Thyroid gland (tissue), 4 donors: ENCODE measurements at regions of chr11 and their contacts with region 1.

Region 1: DNA sequence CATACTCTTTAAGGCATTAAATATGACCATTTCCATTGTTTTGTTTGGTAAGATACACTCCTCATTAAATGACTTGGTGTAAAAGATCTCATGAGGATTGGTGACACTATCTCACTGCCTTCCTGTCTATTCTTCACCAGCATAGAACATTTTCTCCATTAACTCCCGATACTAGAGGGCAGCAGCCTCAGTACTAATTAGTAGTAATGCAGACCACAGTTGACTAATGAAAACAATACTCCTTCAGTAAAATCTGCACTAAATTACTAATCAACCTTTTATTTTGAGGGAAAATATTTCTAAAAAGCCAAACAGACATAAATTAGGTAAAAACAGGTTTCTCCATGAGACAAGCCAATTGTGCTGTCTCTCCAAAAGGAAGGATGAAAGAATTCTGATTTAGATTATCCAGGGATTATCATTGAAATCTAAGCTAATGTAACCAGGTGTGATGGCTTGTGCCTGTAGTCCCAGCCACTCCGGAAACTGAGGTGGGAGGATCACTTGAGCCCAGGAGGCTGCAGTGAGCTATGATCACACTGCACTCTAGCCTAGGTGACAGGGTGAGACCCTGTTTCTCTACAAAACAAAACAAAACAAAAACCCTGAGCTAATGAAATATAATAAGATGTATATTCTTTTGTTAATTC is 9.4 kb downstream of the PGM2L1 start:
- DNase-seq: peak; percentile 69 to 73
- H3K4me3 ChIP-seq: no peak overlapping the region
- H3K27ac ChIP-seq: no peak overlapping the region
- H3K4me1 ChIP-seq: peaks cover 4 to 6% of the 10 kb centered on the region in 2 donors
- H3K27me3 ChIP-seq: no peaks in the 10 kb centered on the region
- CTCF ChIP-seq: peak; percentile 46 to 84 (median 66)
- POLR2A ChIP-seq: no peak

Region 2: DNA sequence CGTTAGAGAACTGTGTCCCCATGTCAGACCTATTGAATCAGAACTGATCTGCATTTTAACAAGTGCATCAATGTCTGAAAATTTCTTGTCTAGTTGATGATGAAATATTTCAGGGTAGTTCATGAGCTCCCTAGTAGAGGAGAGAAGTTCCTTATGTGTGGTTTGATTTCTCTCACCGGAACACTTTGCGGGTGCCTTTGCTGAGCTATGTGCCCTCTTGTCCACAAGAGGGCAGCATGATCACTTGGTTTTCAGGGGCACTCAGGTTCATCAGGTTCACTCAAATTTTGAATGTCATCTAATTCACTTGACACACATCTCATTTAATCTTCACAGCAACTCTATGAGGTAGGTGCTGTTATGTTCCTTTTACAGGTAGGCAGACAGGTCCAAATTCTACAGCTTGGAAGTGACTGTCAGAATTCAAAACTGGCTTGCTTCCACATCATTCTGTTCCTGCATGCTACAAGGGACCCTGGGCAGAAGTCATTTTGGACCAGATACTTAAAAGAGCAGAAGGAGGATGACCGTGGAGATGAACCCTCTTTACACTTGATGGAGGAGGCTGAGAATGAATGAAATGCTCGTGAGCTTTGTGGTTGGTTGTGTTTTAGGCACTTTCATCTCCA is 132.9 kb before region 1 on chr11:
- intact Hi-C with region 1: loop called (anchors 10 kb)
- DNase-seq: peak; percentile 65 to 70
- H3K4me3 ChIP-seq: no peak overlapping the region
- H3K27ac ChIP-seq: no peak overlapping the region
- H3K4me1 ChIP-seq: peaks cover 16 to 31% of the 10 kb centered on the region in 2 donors
- H3K27me3 ChIP-seq: no peaks in the 10 kb centered on the region
- CTCF ChIP-seq: peak; percentile 83 to 92 (median 88)
- POLR2A ChIP-seq: no peak

Region 3: GRCh38 chr11:74443071-74443864 is 54.5 kb after region 1 on chr11:
- intact Hi-C with region 1: loop called (anchors 5 kb)
- DNase-seq: peak; percentile 85 to 86
- H3K4me3 ChIP-seq: no peak overlapping the region
- H3K27ac ChIP-seq: peak overlapping the region; percentile 38 to 70 (median 62)
- H3K4me1 ChIP-seq: peaks cover 3 to 16% of the 10 kb centered on the region in 2 donors
- H3K27me3 ChIP-seq: no peaks in the 10 kb centered on the region
- CTCF ChIP-seq: peak in 4 of 6 experiments; percentile 51 to 86 (median 80)
- POLR2A ChIP-seq: no peak